Right cardiac atrium (tissue), 5 donors: ENCODE measurements at regions of chr3 and their contacts with region 1.

Region 1: DNA sequence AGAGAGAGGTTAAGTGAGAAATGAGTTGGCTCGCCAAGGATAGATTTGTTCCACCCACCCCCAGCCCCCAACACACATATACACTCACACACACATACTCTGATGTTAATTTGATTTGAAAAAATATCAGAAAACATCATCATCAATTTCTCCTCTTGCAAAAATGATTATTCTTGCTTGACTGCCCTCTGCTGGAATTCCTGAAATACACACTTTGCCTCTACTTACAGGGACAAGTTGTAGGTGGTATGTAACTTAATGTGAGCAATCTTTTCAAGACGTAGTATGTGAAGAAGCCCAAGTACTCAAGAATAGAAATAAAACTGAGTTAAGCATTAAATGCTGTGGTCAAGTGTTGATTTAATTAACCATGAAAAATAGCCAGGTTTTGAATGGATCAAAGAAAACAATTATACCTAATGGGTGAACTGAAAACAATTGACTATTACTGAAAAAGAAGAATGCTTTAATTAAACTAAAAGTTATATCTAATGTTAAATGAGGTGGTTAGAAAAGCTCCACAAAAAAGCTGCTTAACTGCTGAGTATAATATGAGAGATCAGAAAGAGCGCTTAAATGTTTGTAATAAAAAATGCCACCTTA is 46.6 kb upstream of the MDFIC2 start:
- DNase-seq: no peak
- ATAC-seq: no peak
- H3K4me3 ChIP-seq: no peak overlapping the region
- H3K27ac ChIP-seq: no peak overlapping the region
- H3K4me1 ChIP-seq: no peaks in the 10 kb centered on the region
- H3K27me3 ChIP-seq: no peaks in the 10 kb centered on the region

Region 2: DNA sequence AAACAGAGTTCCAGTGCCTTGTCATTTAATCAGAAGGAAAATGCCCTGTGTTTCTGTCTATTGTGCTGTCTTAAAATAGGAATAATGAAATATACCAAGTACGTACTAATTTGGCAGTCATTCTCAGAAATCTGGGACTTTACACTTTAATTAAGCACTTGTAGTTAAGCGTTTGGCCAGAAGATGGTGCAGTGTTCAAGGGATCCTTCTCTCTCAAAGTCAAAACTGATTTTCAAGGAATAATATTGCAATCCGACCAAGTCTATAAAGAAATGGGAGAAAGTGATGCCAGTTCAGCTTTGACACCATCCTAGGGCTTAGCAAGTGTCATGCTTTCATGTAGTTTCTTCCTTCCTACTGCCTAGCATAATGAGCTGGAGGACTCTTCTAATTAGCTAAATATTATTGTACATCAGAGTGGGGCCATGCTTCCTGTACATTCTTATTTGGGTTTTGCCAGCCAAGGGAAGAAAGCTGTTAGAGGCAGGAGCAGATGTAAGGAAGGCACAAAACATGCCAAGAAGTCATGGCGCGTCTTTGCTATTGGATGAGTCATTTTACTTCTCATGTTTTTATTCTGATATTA is 294.8 kb before region 1 on chr3:
- intact Hi-C with region 1: loop called in 1 of 4 experiments (anchors 10 kb)
- DNase-seq: no peak
- ATAC-seq: no peak
- H3K4me3 ChIP-seq: no peak overlapping the region
- H3K27ac ChIP-seq: no peak overlapping the region
- H3K4me1 ChIP-seq: no peaks in the 10 kb centered on the region
- H3K27me3 ChIP-seq: no peaks in the 10 kb centered on the region

Region 3: DNA sequence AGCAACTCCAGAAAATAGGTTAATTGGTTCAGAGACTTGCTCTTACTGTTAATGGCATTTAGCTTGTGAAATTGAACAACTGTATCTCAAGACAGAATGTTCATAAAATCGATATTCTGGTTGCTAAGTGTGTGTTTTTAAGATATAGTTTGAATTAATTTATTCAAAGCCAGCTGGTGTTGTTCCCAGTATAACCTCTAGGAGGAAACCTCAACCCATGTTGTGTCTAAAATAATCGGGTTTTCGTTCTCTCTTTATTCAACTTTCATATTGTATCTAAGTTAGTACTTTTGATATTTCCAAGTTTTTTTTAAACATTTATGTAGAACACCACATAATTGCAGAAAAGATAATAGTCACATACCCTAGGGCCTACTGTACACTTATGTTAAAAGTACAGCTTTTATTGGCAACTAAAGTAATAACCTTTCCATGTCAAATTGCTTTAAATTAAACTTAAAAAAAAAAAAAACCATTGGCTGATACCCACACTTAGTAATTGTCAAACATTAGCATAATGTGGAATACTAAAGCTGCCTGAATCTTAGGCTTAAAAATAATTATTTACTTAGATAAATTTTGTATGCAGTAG is 268.7 kb before region 1 on chr3:
- intact Hi-C with region 1: loop called in 2 of 4 experiments (anchors 10 kb)
- DNase-seq: no peak
- ATAC-seq: no peak
- H3K4me3 ChIP-seq: no peak overlapping the region
- H3K27ac ChIP-seq: no peak overlapping the region
- H3K4me1 ChIP-seq: no peaks in the 10 kb centered on the region
- H3K27me3 ChIP-seq: no peaks in the 10 kb centered on the region

Region 4: DNA sequence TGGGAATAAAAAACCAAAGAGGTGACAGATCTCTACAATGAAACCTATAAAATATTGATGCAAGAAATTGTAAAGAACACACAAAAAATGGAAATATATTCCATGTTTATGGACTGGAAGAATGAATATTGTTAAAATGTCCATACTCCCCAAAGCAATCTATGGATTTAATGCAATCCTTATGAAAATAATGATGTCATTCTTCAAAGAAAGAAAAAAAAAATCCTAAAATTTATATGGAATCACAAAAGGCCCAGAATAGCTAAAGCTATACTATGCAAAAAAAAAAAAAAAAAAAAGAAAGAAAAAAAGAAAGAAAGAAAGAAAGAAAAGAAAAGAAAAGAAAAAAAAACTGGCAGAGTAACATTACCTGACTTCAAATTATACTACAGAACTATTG is 97.9 kb after region 1 on chr3:
- intact Hi-C with region 1: no loop called
- DNase-seq: no peak
- ATAC-seq: no peak
- H3K4me3 ChIP-seq: no peak overlapping the region
- H3K27ac ChIP-seq: no peak overlapping the region
- H3K4me1 ChIP-seq: no peaks in the 10 kb centered on the region
- H3K27me3 ChIP-seq: no peaks in the 10 kb centered on the region